Stomach (tissue), 19 donors: ENCODE measurements at regions of chr12 and their contacts with region 1.

Region 1: GRCh38 chr12:115916910-115917668 is 360.4 kb downstream of the MED13L start:
- DNase-seq: peak; percentile 81 to 85
- H3K4me3 ChIP-seq: peak overlapping the region; percentile 19 to 35 (median 30)
- H3K27ac ChIP-seq: no peak overlapping the region
- H3K4me1 ChIP-seq: peaks cover 3 to 7% (median 5%) of the 10 kb centered on the region in 4 donors
- H3K27me3 ChIP-seq: peaks cover 0 to 53% (median 23%) of the 10 kb centered on the region in 3 donors
- CTCF ChIP-seq: peak in 5 of 7 experiments; percentile 92 to 97 (median 96)
- EP300 ChIP-seq: no peak
- POLR2A ChIP-seq: no peak

Region 2: GRCh38 chr12:114662512-114663177 is 1254.4 kb before region 1 on chr12:
- intact Hi-C with region 1: loop called (anchors 5 kb)
- DNase-seq: peak; percentile 88 to 91
- H3K4me3 ChIP-seq: no peak overlapping the region
- H3K27ac ChIP-seq: no peak overlapping the region
- H3K4me1 ChIP-seq: peaks cover 0 to 35% (median 21%) of the 10 kb centered on the region in 4 donors
- H3K27me3 ChIP-seq: peaks cover 15 to 86% (median 33%) of the 10 kb centered on the region in 3 donors
- CTCF ChIP-seq: peak in 5 of 7 experiments; percentile 83 to 97 (median 90)
- EP300 ChIP-seq: no peak
- POLR2A ChIP-seq: no peak

Region 3: GRCh38 chr12:115574826-115575225 is 342.3 kb before region 1 on chr12:
- intact Hi-C with region 1: no loop called
- DNase-seq: no peak
- H3K4me3 ChIP-seq: no peak overlapping the region
- H3K27ac ChIP-seq: no peak overlapping the region
- H3K4me1 ChIP-seq: no peaks in the 10 kb centered on the region
- H3K27me3 ChIP-seq: no peaks in the 10 kb centered on the region
- CTCF ChIP-seq: no peak
- EP300 ChIP-seq: no peak
- POLR2A ChIP-seq: no peak

Region 4: DNA sequence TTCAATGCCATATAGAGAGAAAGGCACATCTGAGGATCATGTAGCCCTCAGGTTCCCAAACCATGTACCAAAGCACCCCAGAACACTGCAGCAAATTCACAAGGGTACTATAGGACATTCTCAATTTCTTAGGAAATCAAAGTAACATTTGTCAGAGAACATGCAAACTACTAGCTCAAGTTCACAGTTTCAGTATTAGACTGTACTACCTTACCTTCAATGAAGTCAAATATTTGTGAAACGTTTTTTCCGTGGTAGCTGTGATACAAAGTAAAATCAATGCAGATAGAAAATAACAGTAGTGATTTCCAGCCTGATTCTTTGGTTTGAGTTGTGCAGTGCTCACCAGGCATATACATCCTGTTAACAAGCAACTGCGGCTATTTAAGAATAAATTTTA is 163.3 kb after region 1 on chr12:
- intact Hi-C with region 1: no loop called
- DNase-seq: no peak
- H3K4me3 ChIP-seq: no peak overlapping the region
- H3K27ac ChIP-seq: no peak overlapping the region
- H3K4me1 ChIP-seq: peaks cover 0 to 34% (median 13%) of the 10 kb centered on the region in 4 donors
- H3K27me3 ChIP-seq: no peaks in the 10 kb centered on the region
- CTCF ChIP-seq: no peak
- EP300 ChIP-seq: no peak
- POLR2A ChIP-seq: no peak